Testis (tissue), 5 donors: ENCODE measurements at regions of chr18 and their contacts with region 1.

Region 1: DNA sequence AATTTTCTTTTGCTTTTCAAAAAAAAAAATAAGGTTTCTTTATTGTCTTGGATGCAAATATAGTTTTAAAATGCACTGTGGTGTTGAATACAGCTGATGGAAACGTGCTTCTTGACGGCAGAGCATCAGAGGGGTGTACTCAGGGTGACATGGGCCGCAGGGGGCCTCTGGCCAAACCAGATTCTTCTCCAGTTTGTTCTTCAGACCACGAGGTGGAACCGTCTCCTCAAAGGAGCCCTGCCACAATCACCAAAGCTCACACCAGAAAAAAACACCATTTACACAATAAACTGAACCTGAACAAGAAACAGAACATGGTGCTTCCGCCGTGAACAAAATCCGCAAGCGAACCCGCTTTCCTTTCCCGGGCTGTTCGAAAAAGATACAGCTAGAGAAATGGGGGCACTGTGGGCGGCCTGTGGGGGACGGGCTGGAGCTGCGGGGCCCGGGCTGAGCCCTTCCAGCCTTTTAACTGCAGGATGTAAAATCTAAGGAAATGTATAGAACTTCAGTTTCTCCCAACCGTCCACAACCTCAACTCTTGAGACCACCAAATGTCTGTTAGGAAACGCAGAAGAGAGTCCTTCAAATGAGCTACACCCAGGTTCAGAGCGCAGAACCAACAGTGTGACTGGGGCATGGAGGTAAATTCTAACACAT is 34.5 kb downstream of the PSMG2 start:
- DNase-seq: no peak
- H3K4me3 ChIP-seq: no peak overlapping the region
- H3K27ac ChIP-seq: no peak overlapping the region
- H3K4me1 ChIP-seq: no peaks in the 10 kb centered on the region
- H3K27me3 ChIP-seq: no peaks in the 10 kb centered on the region
- CTCF ChIP-seq: no peak
- POLR2A ChIP-seq: no peak

Region 2: GRCh38 chr18:12460874-12461273 is 276.5 kb before region 1 on chr18:
- intact Hi-C with region 1: no loop called
- DNase-seq: peak; percentile 36
- H3K4me3 ChIP-seq: no peak overlapping the region
- H3K27ac ChIP-seq: peak overlapping the region; percentile 7 to 56
- H3K4me1 ChIP-seq: peaks cover 5% of the 10 kb centered on the region
- H3K27me3 ChIP-seq: no peaks in the 10 kb centered on the region
- CTCF ChIP-seq: no peak
- POLR2A ChIP-seq: no peak

Region 3: GRCh38 chr18:12751931-12752330 is 14.6 kb after region 1 on chr18:
- intact Hi-C with region 1: no loop called
- DNase-seq: no peak
- H3K4me3 ChIP-seq: no peak overlapping the region
- H3K27ac ChIP-seq: no peak overlapping the region
- H3K4me1 ChIP-seq: no peaks in the 10 kb centered on the region
- H3K27me3 ChIP-seq: no peaks in the 10 kb centered on the region
- CTCF ChIP-seq: no peak
- POLR2A ChIP-seq: no peak

Region 4: GRCh38 chr18:12811191-12811950 is 74.0 kb after region 1 on chr18:
- intact Hi-C with region 1: no loop called
- DNase-seq: no peak
- H3K4me3 ChIP-seq: no peak overlapping the region
- H3K27ac ChIP-seq: no peak overlapping the region
- H3K4me1 ChIP-seq: no peaks in the 10 kb centered on the region
- H3K27me3 ChIP-seq: no peaks in the 10 kb centered on the region
- CTCF ChIP-seq: no peak
- POLR2A ChIP-seq: no peak

Region 5: GRCh38 chr18:12934454-12935071 is 197.2 kb after region 1 on chr18:
- intact Hi-C with region 1: loop called (anchors 5 kb)
- DNase-seq: peak; percentile 89
- H3K4me3 ChIP-seq: no peak overlapping the region
- H3K27ac ChIP-seq: no peak overlapping the region
- H3K4me1 ChIP-seq: no peaks in the 10 kb centered on the region
- H3K27me3 ChIP-seq: no peaks in the 10 kb centered on the region
- CTCF ChIP-seq: peak; percentile 70 to 77 (median 74)
- POLR2A ChIP-seq: no peak

Region 6: DNA sequence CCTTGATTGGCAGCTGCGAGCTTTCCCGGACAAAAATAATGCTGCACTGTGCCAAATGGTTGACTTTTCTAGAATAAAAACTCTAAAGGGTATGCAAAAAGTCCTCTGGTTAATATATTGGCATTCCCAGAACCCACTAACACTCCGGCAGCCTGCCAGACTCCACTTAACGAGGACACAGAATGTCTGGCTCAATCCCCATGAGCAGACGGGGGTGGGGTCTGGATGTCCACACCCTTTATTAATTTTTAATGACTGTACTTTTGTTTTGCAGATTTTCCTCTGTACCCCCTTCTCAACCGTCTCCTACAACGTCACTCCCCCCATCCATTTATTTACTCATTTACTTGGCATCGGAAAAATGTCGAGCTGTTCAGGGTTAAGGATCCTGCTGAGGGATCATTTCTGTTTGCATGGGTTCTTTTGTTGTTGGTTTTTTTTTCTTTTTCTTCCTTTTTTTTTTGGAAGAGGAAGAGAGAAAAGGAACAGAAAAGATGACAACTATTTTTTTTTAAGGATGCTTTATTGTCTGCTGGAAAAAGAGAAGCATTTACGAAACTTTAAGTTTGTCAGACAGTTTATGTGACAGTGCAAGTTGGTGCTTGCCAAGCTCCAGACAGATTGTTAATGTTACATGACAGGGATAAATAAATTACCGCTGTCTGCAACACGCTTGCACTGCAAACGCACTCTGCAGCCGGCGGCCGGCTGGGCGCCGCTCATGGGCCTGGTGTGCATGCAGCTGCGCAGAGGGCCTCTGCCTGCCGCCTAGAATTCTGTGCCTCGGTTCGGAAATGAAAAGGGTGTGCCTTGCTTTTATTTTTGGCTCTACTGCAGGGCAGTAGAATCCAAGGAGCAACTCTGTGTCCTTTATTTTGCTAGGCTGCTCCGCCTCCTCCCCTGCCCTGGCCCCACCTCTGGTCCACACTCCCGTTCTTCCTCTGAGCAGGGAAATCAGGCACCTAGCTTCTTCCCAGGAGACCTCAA is 484.8 kb after region 1 on chr18:
- intact Hi-C with region 1: no loop called
- DNase-seq: peak; percentile 54
- H3K4me3 ChIP-seq: no peak overlapping the region
- H3K27ac ChIP-seq: peak overlapping the region; percentile 34 to 48
- H3K4me1 ChIP-seq: peaks cover 35% of the 10 kb centered on the region
- H3K27me3 ChIP-seq: no peaks in the 10 kb centered on the region
- CTCF ChIP-seq: no peak
- POLR2A ChIP-seq: no peak